ENCODE measurements at regions of chr16 and their contacts with region 1.

Region 1: GRCh38 chr16:88856828-88857733 is at the starts of genes GALNS and TRAPPC2L:
- DNase-seq: peak; percentile 97
- H3K4me3 Mint-ChIP-seq: peak within 1 kb of the TSS; percentile 97
- H3K27ac Mint-ChIP-seq: peak within 1 kb of the TSS; percentile 88
- H3K4me1 Mint-ChIP-seq: peaks cover 14% of the 10 kb centered on the region
- H3K27me3 Mint-ChIP-seq: no peaks in the 10 kb centered on the region
- total RNA-seq, gene GALNS: 26.1 and 27.8 TPM in 2 replicates
- total RNA-seq, gene TRAPPC2L: 56.5 and 57.5 TPM in 2 replicates

Region 2: DNA sequence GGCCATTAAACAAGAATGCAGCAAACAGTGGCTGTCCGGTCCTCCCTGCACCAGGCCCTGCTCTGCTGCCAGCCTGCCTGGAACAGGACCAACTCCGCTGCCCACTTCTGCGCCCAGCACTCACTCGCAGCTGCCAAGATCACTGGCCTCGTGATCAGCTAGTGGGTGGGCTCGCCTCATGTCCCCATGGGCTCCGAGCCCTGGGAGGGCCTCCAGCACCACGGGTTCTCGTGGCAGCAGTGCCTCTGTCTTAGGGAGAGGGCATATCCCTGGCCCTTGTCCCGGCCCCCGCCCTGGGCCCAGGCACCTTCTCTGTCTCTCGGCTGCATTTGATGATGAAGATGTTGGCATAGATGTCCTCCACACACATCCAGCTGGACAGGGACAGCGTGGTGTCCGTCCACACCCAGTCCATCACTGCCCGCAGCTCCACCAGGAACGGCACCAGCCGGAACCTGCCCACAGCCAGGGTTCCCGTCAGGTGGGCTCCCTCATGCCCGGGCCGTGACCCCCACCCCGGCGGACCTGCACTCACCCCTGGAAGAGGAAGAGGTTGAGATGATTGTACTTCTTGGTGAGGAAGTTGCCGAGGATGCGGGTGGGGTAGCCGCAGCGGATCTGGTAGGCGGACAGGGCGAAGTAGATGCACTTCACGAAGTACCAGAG is 137.7 kb before region 1 on chr16:
- intact Hi-C with region 1: no loop called
- DNase-seq: no peak
- H3K4me3 Mint-ChIP-seq: no peak overlapping the region
- H3K27ac Mint-ChIP-seq: no peak overlapping the region
- H3K4me1 Mint-ChIP-seq: no peaks in the 10 kb centered on the region
- H3K27me3 Mint-ChIP-seq: no peaks in the 10 kb centered on the region

Region 3: DNA sequence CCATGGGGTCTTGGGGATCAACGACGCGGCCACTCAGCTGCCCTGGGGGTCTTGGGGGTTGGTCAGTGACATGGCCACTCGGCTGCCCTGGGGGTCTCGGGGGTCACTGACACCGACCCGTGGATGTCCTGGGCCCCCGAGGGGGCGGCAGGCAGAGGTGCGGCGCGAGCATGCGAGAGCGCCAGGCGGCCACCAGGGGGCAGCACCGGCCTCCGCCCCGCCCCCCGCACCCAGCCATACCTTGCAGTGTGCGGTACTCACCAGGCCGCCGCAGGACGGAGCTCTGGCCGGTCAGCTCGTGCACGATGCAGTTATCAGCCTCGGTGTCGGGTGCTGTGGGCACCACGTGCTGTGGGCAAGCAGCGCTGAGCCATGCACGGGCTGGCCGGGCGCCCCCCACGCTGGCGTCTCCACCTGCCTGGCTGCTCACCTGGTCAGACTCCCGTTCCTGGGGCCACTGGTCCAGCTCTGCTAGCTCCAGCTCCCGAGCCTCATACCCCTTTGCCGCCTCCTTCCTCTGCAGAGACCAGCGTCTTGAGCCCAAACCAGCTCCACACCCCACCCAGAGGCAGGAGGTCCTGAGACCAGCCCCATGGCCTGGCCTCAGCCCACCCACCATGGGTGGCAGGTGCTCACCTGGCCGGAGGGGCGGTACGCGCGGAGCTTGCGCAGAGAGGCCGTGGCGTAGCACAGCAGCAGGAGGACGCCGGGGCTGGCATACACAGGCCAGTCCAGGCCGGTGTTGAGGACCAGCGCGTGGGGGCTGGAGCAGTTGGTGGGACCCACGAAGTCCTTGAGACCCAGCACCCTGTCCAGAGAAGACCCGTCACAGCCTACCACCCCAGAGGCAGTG is 119.6 kb before region 1 on chr16:
- intact Hi-C with region 1: loop called (anchors 1 kb)
- DNase-seq: peak; percentile 54
- H3K4me3 Mint-ChIP-seq: no peak overlapping the region
- H3K27ac Mint-ChIP-seq: no peak overlapping the region
- H3K4me1 Mint-ChIP-seq: no peaks in the 10 kb centered on the region
- H3K27me3 Mint-ChIP-seq: no peaks in the 10 kb centered on the region

Region 4: DNA sequence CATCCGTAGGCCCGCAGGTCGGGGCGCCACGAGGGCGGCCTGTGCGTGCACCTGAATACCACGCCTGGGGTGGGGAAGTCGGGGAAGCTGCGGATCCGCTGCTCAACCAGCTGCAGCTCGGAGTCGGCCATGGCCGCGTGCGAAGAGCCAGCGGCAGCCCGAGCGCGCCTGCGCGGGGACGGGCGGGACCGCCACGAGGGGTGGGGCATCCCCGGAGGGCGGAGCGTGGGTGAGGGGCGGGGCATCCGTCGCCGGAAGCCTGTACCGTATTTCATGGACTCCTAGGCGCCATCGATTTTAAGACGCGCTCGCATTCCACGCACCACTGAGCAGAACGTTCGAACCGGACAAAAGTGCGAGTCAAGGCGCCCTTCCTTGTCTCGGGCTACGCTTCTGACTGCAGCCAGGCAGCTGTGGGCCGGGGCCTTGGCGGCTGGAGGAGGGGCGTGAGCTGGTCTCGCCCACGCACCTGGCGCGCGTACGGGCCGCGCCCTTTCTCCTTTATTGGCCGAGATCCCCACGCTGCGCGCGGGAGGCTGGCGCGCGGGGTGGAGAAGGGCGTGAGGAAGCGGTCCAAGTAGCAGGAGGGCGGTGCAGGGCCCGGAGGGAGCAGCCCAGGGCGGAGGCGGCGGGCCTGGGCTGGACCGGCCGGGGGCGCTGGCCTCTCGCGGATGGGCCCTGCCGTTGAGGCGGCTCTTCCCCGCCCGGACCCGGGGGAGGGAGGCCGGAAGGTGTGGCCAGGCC is 45.1 kb before region 1 on chr16 and contains the start of gene APRT:
- intact Hi-C with region 1: loop called (anchors 2 kb)
- DNase-seq: peak; percentile 97
- H3K4me3 Mint-ChIP-seq: peak within 1 kb of the TSS; percentile 90
- H3K27ac Mint-ChIP-seq: peak within 1 kb of the TSS; percentile 97
- H3K4me1 Mint-ChIP-seq: peaks cover 9% of the 10 kb centered on the region
- H3K27me3 Mint-ChIP-seq: no peaks in the 10 kb centered on the region
- total RNA-seq, gene APRT: 294 and 300 TPM in 2 replicates